ENCODE measurements at regions of chr1 and their contacts with region 1.

Region 1: GRCh38 chr1:31959521-31960340 is 21.6 kb upstream of the PTP4A2 start:
- DNase-seq: peak in 8 of 42 donors; percentile 16 to 53 (median 27)

Region 2: DNA sequence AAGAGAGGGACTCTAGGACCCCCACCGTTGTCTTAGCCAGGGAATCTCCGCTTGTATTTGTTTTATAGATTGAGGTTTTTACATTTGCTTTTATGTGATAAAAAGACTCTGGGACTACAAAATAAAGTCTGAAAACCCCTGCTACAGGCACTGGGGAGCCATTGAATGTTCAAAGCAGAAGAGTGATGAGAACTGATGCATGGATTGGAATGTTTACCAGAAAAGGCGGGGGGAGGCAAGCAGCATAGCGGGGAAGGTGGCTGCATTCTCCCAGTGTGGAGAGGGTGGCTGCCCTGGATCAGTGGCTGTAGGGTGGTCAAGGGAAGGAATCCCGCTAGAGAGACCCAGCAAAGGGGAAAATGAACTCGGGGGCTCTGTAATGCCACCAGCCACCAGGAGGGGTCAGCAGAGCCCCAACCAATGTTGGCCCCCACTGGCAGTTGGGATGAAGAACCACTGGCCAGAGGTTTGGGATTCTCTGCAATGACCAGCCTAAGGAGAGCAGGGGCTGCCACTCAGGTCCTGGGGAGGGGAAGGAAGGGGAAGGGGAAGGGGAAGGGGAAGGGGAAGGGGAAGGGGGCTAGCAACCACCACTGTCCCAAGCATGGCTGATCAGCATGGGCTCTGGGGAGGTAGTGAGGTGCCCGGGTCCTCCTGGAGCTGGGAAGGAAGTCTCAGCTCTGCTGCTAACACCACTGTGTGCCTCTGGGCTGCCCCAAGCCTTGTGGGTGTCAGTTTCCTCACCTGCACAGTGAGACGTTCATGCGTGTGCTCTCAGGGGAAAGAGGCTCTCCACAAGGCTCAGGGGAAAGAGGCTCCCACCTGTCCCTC is 295.9 kb before region 1 on chr1:
- intact Hi-C with region 1: loop called (anchors 10 kb)
- DNase-seq: peak in 41 of 42 donors; percentile 45 to 91 (median 73)

Region 3: GRCh38 chr1:31762726-31763670 is 196.7 kb before region 1 on chr1:
- intact Hi-C with region 1: loop called (anchors 10 kb)
- DNase-seq: peak; percentile 59 to 94 (median 86)

Region 4: DNA sequence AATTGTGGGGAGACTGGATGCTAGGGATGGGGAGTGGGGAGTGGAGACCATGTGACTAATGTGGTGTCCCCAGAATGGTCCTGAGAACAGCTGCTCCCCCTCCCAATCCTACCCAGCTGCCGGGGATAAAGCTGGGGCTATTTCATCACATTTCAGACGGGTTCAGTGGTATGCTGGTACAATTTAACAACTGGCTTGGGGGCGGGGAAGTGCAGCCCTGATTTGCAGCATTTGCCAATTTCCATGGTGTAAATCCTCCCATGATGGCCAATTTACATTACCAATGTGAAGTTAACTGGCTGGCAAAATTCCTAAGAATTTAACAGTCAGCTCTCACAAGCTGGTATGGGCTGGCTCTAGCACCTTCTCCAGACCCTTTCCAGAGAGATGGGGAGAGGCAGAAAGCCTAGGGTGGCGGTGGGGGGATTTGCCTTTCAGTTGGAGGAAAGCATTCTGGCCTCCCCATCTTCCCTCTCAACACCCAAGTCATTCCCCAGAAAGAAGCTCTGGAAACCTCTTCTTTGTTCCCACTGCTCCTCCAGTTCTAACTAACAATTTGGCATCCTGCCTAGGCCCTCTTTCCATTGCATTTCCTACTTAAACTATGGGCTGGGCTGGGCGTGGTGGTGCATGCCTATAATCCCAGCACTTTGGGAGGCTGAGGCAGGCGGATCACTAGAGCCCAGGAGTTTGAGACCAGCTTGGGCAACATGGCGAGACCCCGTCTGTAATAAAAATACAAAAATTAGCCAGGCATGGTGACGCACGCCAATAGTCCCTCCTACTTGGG is 184.3 kb before region 1 on chr1:
- intact Hi-C with region 1: no loop called
- DNase-seq: no peak